HEK293T (cell line): ENCODE measurements at regions of chr1 and their contacts with region 1.

Region 1: GRCh38 chr1:26541816-26542711 is 12.5 kb downstream of the RPS6KA1 start:
- DNase-seq: peak; percentile 59

Region 2: GRCh38 chr1:26482921-26483680 is 59.0 kb before region 1 on chr1:
- CTCF ChIA-PET with region 1: no interaction called
- POLR2A ChIA-PET with region 1: no interaction called
- DNase-seq: no peak

Region 3: DNA sequence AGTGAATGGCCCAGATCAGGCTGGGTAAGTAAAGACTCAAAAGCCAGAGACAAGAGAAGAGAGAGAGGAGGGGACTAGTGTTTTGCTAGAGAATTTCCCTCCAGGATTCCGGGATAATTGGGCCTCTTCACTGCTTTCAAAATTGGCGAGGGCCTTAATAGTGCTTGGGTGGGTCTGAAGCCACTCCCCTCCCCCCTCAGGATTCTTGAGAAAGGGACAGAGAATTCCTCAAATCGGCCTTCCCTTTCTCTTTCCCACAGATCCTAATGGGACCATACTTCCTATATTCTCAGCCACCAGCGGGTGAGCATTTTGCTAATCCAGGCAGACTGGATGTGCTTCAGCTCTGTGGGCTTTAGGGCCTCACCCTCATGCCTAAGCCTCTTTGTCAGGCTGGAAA is 332.8 kb after region 1 on chr1:
- CTCF ChIA-PET with region 1: interaction called, 10 read pairs
- POLR2A ChIA-PET with region 1: no interaction called
- DNase-seq: no peak